Aorta (tissue), 5 donors: ENCODE measurements at regions of chr11 and their contacts with region 1.

Region 1: DNA sequence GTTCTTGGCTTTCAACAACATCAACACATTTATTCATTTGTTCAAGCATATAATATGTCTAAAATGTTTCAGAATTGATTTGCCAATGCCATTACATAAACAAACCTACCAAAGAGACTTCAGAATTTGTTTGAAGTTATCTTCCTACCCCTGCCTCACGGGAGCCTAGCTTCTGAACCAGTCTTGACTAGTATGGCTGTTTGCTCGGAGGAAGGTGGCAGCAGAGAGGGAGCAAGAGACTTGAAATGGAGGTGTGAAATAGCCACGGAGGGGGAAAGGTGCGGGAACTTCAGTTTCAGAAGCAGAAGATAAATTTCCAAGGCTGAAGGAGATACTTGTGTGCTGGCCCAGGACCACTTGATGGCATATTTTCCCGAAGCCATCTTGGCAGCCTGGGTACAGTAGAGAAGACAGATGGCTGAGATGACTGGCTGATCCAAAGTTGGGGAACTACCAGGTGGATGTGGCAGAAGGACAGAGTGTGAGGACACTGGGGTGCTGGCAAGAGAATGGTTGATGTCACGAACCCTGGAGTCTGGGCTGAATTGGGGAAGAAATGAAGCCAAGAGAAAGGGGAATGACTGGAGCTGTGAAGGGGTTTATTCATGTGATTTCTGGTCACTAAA is 14.0 kb upstream of the MTCH2 start:
- DNase-seq: peak in 1 of 2 donors; percentile 9
- ATAC-seq: no peak
- H3K4me3 ChIP-seq: no peak overlapping the region
- H3K27ac ChIP-seq: no peak overlapping the region
- H3K4me1 ChIP-seq: no peaks in the 10 kb centered on the region
- H3K27me3 ChIP-seq: no peaks in the 10 kb centered on the region

Region 2: GRCh38 chr11:47705721-47706120 is 49.3 kb after region 1 on chr11:
- intact Hi-C with region 1: loop called in 1 of 2 experiments (anchors 10 kb)
- DNase-seq: no peak
- ATAC-seq: no peak
- H3K4me3 ChIP-seq: no peak overlapping the region
- H3K27ac ChIP-seq: no peak overlapping the region
- H3K4me1 ChIP-seq: no peaks in the 10 kb centered on the region
- H3K27me3 ChIP-seq: no peaks in the 10 kb centered on the region